ENCODE measurements at regions of chr7 and their contacts with region 1.

Region 1: GRCh38 chr7:130084037-130084875 is 13.9 kb downstream of the KLHDC10 start:
- DNase-seq: peak in 3 of 4 experiments; percentile 41 to 50 (median 44)
- ATAC-seq: peak; percentile 81
- H3K4me3 ChIP-seq: no peak overlapping the region
- H3K27ac ChIP-seq: no peak overlapping the region
- H3K4me1 ChIP-seq: peaks cover 0 to 6% of the 10 kb centered on the region in 2 experiments; a peak in 2 of 5 replicates
- H3K27me3 ChIP-seq: no peaks in the 10 kb centered on the region
- CTCF ChIP-seq: peak; percentile 40 to 72 (median 70); a peak in 5 of 6 replicates
- EP300 ChIP-seq: no peak
- POLR2A ChIP-seq: no peak
- RAD21 ChIP-seq: no peak; a peak in 1 of 4 replicates

Region 2: DNA sequence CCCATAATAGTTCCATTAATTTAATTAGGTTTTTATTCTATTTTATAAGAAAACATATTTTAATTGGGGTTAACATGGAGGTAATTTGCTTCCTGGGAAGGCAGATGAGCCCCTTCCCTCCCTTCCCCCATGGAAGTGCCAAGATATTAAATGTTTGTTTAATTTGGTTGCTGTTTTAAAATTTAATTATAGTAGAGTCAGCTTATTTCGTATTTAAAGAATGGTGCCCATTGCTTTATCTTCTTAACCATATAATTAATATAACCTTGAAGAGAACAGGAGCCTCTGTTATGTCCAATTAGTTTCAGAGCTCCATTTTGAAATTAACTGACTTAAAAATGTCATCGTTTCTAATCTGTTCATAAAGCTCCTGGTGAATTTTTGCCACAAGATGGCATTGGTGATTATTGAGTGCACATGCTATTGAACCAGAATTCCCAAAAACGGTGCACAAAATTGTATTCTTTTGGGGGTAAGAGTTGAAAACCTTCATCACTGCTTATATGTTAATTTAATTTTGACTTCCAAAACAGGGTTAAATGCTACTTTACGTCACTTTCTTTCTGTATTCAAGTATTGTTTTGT is 12.1 kb after region 1 on chr7:
- CTCF ChIA-PET with region 1: no interaction called
- POLR2A ChIA-PET with region 1: interaction called, 11 read pairs
- in situ Hi-C with region 1: no loop called
- intact Hi-C with region 1: no loop called
- DNase-seq: peak in 1 of 4 experiments; percentile 39
- ATAC-seq: no peak
- H3K4me3 ChIP-seq: no peak overlapping the region
- H3K27ac ChIP-seq: peak overlapping the region; percentile 5; the same call in 1 of the 3 replicates
- H3K4me1 ChIP-seq: peaks cover 0 to 21% of the 10 kb centered on the region in 2 experiments
- H3K27me3 ChIP-seq: no peaks in the 10 kb centered on the region
- CTCF ChIP-seq: peak in 2 of 3 experiments; percentile 28 to 63; a peak in 2 of 6 replicates
- EP300 ChIP-seq: no peak
- POLR2A ChIP-seq: no peak
- RAD21 ChIP-seq: peak; percentile 44 to 66

Measured in K562 (cell line).